Activated T-helper 2 cell treated with anti-CD3 and anti-CD28 coated beads, Interferon-gamma antibody, Interleukin-2, Interleukin-4, amounts not matched to agents 10 μg/mL and 5 μg/mL and 100 μg/mL, durations not matched to agents 14 hours and 24 hours and 36 hours (primary cell): ENCODE measurements at regions of chr5 and their contacts with region 1.

Region 1: GRCh38 chr5:154467655-154468354 is 10.2 kb downstream of the HAND1 start:
- DNase-seq: peak; percentile 53
- H3K4me3 Mint-ChIP-seq: no peak overlapping the region
- H3K27ac Mint-ChIP-seq: no peak overlapping the region
- H3K4me1 Mint-ChIP-seq: peaks cover 2% of the 10 kb centered on the region
- H3K27me3 Mint-ChIP-seq: peaks cover 49% of the 10 kb centered on the region

Region 2: DNA sequence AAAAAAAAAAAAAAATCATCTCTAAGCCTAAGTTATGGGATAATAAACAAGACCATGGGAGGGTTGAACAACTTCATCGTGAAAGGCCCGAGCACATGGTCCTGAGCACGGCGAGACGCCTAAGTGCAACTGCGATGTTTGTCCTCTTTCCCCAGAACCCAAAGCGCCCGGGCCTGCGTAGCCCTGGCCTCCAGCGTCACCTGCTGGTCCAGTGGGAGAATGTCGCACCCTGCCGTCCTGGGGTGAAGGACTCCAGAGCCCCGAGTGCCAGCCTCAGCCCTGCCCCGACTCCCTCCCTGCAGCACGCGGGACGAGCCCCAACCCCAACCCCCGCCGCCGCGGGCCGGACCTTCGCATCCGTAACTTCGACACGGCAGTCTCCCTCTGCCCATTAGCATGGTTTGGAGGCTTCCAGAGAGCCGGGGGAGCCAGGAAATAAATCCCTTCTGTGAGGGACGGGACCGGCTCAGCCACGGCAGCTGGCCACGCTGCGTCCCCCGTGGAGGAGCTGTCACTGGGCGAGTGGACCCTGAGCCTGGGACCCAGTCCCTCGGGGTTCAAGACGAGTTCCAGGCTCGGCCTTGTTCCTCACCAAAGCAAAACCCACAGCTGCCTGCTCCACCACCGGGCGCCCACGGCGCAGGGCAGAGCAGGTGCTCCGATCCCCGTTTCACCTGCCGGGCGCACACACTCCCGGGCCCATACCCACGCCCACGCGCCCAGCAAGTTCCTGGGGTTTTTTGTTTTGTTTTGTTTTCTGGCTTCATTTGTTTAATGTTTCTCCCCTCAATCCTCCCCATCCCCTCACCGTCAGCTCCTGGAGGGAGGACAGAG is 142.7 kb after region 1 on chr5:
- intact Hi-C with region 1: loop called (anchors 1 kb)
- DNase-seq: peak; percentile 53
- H3K4me3 Mint-ChIP-seq: no peak overlapping the region
- H3K27ac Mint-ChIP-seq: no peak overlapping the region
- H3K4me1 Mint-ChIP-seq: peaks cover 4% of the 10 kb centered on the region
- H3K27me3 Mint-ChIP-seq: peaks cover 46% of the 10 kb centered on the region

Region 3: GRCh38 chr5:154756811-154757675 is 289.2 kb after region 1 on chr5:
- intact Hi-C with region 1: no loop called
- DNase-seq: peak; percentile 30
- H3K4me3 Mint-ChIP-seq: peak overlapping the region; percentile 97
- H3K27ac Mint-ChIP-seq: peak overlapping the region; percentile 98
- H3K4me1 Mint-ChIP-seq: peaks cover 53% of the 10 kb centered on the region
- H3K27me3 Mint-ChIP-seq: no peaks in the 10 kb centered on the region